ENCODE measurements at regions of chr10 and their contacts with region 1.

Region 1: GRCh38 chr10:29735596-29736318 is 101.0 kb upstream of the SVIL start:
- DNase-seq: peak; percentile 57 to 92 (median 83)
- ATAC-seq: peak; percentile 79
- H3K4me3 ChIP-seq: peak overlapping the region; percentile 55 to 77
- H3K4me3 Mint-ChIP-seq: peak overlapping the region; percentile 88
- H3K27ac ChIP-seq: peak overlapping the region in 1 of 2 experiments; percentile 59
- H3K27ac Mint-ChIP-seq: peak overlapping the region; percentile 83
- H3K4me1 ChIP-seq: peaks cover 42% of the 10 kb centered on the region
- H3K4me1 Mint-ChIP-seq: peaks cover 42% of the 10 kb centered on the region
- H3K27me3 ChIP-seq: no peaks in the 10 kb centered on the region
- H3K27me3 Mint-ChIP-seq: no peaks in the 10 kb centered on the region
- CTCF ChIP-seq: peak; percentile 82

Region 2: DNA sequence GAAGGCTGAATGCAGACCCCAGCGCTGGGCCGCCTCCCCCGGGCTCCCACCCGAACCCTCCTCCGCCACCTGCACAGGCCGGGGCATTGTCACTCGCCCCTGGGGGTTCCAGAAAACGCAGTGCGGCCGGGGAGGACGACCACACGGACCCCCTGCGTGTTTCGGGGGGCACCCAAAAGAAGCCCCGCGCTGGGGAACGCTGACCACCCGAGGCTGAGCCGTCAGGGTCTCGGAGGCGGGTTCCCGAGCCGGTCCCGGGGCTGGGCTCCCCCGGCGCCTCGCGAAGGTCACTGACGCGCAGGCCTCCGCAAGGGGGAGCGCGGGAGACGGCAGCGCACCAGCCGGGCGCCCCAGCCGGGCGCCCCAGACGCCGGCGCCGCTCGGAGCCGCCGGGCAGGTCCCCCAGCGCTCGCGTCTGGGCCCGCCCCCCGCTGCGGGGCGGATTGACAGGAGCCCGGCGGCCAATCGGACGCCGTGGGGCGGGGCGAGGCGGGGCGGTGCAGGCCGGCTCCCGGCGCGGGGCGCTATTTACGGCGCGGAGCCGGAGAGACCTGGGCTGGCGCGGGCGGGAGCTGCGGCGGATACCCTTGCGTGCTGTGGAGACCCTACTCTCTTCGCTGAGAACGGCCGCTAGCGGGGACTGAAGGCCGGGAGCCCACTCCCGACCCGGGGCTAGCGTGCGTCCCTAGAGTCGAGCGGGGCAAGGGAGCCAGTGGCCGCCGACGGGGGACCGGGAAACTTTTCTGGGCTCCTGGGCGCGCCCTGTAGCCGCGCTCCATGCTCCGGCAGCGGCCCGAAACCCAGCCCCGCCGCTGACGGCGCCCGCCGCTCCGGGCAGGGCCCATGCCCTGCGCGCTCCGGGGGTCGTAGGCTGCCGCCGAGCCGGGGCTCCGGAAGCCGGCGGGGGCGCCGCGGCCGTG is 1058.5 kb before region 1 on chr10 and contains the start of gene BAMBI:
- CTCF ChIA-PET with region 1: no interaction called
- POLR2A ChIA-PET with region 1: no interaction called
- intact Hi-C with region 1: loop called in 1 of 2 experiments (anchors 5 kb)
- DNase-seq: peak; percentile 76 to 95 (median 88)
- ATAC-seq: peak; percentile 96
- H3K4me3 ChIP-seq: peak within 1 kb of the TSS; percentile 53 to 59
- H3K4me3 Mint-ChIP-seq: peak within 1 kb of the TSS; percentile 86
- H3K27ac ChIP-seq: no peak within 1 kb of the TSS
- H3K27ac Mint-ChIP-seq: no peak within 1 kb of the TSS
- H3K4me1 ChIP-seq: peaks cover 34% of the 10 kb centered on the region
- H3K4me1 Mint-ChIP-seq: peaks cover 31% of the 10 kb centered on the region
- H3K27me3 ChIP-seq: peaks cover 19 to 20% of the 10 kb centered on the region in 2 experiments
- H3K27me3 Mint-ChIP-seq: peaks cover 68% of the 10 kb centered on the region
- CTCF ChIP-seq: peak; percentile 40
- total RNA-seq, gene BAMBI: 3.5 to 3.6 TPM

Region 3: DNA sequence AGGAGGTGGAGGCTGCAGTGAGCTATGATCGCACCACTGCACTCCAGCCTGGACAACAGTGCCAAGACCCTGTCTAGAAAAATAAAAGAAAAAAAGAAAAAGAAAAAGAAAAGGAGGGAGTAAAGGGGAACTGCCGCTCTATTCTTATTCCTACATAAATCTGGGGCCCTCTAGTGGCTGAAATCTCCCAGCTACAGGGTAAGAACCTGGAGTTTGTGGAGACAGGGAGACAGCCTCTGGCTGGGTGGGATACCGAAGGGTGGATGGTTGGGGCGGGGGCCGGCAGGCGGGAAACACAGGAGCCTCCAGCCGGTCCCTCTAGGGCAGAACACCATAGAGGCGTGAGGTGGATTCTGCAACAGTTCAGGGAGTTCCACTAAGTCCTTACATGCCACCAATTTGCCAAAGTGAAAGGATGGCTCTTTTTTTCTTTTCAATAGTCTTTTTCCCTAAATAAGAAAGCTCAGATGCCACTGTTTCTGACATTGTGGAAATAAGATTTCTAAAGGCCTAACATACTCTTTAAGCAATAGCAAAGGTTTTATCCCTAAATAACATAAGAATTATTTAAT is 218.3 kb before region 1 on chr10:
- CTCF ChIA-PET with region 1: no interaction called
- POLR2A ChIA-PET with region 1: no interaction called
- intact Hi-C with region 1: loop called in 1 of 2 experiments (anchors 2 kb)
- DNase-seq: no peak
- ATAC-seq: no peak
- H3K4me3 ChIP-seq: no peak overlapping the region
- H3K4me3 Mint-ChIP-seq: no peak overlapping the region
- H3K27ac ChIP-seq: no peak overlapping the region
- H3K27ac Mint-ChIP-seq: no peak overlapping the region
- H3K4me1 ChIP-seq: no peaks in the 10 kb centered on the region
- H3K4me1 Mint-ChIP-seq: no peaks in the 10 kb centered on the region
- H3K27me3 ChIP-seq: no peaks in the 10 kb centered on the region
- H3K27me3 Mint-ChIP-seq: no peaks in the 10 kb centered on the region
- CTCF ChIP-seq: no peak

Region 4: DNA sequence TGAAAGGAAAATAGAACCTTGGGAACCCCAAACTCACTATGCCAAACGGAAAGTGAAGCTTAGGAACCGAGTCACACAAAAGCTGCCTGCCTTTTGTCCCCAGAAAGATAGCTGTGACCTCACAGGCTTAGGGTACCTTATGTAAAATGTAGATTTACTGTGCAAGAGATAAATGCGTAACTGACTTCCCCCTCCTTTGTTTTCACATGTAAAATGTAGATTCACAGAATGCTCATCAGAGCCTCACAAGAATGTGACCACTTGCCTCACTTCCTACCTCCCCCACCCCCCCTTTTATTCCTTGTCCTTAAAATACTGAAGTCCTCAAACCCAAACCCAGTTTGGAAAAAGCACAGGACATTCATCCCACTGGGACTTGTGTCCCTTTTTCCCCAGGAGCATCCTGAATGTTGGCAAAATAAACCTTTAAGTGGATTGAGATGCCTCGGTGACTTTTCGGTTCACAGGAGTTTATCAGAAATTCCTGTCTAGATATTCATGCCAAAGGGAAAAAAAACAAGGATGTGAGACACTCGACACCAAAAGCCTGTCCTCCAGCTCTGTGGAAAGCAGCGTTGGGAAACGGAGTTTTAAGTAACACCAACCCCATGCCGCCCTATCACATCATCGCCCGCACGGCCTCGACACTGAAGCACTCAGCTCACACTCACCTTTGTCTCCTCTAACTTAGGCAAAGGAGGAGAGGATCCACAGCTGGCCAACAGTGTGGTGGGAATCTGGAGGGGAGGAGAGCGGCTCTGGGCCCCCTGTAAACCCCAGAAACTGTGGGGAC is 146.9 kb before region 1 on chr10:
- CTCF ChIA-PET with region 1: interaction called, 15 read pairs
- POLR2A ChIA-PET with region 1: no interaction called
- intact Hi-C with region 1: loop called (anchors 1 to 2 kb)
- DNase-seq: no peak
- ATAC-seq: no peak
- H3K4me3 ChIP-seq: no peak overlapping the region
- H3K4me3 Mint-ChIP-seq: no peak overlapping the region
- H3K27ac ChIP-seq: no peak overlapping the region
- H3K27ac Mint-ChIP-seq: no peak overlapping the region
- H3K4me1 ChIP-seq: peaks cover 6% of the 10 kb centered on the region
- H3K4me1 Mint-ChIP-seq: peaks cover 11% of the 10 kb centered on the region
- H3K27me3 ChIP-seq: no peaks in the 10 kb centered on the region
- H3K27me3 Mint-ChIP-seq: no peaks in the 10 kb centered on the region
- CTCF ChIP-seq: no peak

Region 5: DNA sequence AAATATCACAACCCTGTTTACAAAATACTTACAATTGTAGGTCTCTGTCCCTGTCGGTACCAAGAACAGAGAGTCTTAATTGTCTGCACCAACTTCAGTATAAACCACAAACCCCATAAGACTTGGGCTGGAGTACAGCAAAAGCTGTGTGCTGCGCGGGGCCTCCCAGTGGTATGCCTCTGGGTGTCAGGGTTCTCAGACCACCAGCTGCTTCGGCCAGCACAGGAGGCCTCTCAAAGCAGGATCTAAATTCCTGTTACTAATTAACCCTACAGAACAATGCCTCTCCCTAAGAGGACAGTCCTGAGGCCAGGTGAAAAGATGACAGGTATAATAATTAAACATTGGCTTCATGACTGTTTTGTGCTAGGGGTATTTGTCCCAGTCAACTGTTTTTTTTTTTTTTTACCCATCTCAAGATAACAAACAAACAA is 100.0 kb before region 1 on chr10:
- CTCF ChIA-PET with region 1: interaction called, 8 read pairs
- POLR2A ChIA-PET with region 1: interaction called, 3 read pairs
- intact Hi-C with region 1: loop called (anchors 1 to 5 kb)
- DNase-seq: peak in 5 of 9 experiments; percentile 15 to 53 (median 29)
- ATAC-seq: peak; percentile 35
- H3K4me3 ChIP-seq: no peak overlapping the region
- H3K4me3 Mint-ChIP-seq: peak overlapping the region; percentile 40
- H3K27ac ChIP-seq: peak overlapping the region in 1 of 2 experiments; percentile 41
- H3K27ac Mint-ChIP-seq: peak overlapping the region; percentile 69
- H3K4me1 ChIP-seq: peaks cover 25% of the 10 kb centered on the region
- H3K4me1 Mint-ChIP-seq: peaks cover 41% of the 10 kb centered on the region
- H3K27me3 ChIP-seq: no peaks in the 10 kb centered on the region
- H3K27me3 Mint-ChIP-seq: no peaks in the 10 kb centered on the region
- CTCF ChIP-seq: no peak

Region 6: GRCh38 chr10:29658984-29659965 is 76.5 kb before region 1 on chr10:
- CTCF ChIA-PET with region 1: interaction called, 5 read pairs
- POLR2A ChIA-PET with region 1: no interaction called
- intact Hi-C with region 1: loop called in 1 of 2 experiments (anchors 1 kb)
- DNase-seq: peak; percentile 20 to 95 (median 65)
- ATAC-seq: peak; percentile 92
- H3K4me3 ChIP-seq: no peak overlapping the region
- H3K4me3 Mint-ChIP-seq: peak overlapping the region; percentile 50
- H3K27ac ChIP-seq: peak overlapping the region in 1 of 2 experiments; percentile 55
- H3K27ac Mint-ChIP-seq: peak overlapping the region; percentile 91
- H3K4me1 ChIP-seq: peaks cover 27% of the 10 kb centered on the region
- H3K4me1 Mint-ChIP-seq: peaks cover 27% of the 10 kb centered on the region
- H3K27me3 ChIP-seq: no peaks in the 10 kb centered on the region
- H3K27me3 Mint-ChIP-seq: no peaks in the 10 kb centered on the region
- CTCF ChIP-seq: peak; percentile 46

Region 7: DNA sequence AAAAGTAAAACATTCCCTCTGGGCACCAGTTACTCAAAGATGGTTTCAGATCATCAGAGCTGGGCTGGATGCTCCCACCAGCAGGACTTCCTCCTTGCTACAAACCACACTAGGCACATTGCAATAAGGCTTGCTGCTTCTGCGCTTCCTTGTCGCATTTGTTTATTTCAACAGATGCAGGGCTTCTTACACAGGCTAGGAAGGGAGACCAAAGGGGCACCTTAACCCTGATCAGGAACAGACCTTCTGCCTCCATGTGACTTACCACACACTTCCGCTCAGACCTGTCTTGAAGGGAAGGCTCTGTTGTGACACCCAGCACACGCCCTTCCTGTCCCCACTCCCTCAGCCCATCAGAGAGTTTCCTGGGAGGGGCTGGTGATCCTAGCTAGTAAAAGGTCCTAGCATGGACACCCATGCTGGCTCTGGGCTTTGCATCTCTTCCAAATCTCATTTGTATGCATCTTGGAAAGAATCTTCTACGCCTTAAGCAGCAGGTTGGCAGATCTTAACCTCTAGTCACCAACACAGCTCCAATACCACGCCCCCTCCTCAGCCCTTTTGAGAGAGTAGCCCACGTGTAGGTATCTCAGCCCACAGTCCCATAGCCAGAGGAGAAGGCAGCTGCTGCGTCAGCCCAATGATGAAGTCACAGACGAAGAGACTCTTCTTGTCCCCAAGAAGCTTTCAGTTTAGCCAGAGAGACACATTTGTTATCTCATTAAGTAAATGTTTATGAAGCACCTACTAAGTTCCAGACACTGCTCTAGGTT is 53.9 kb before region 1 on chr10:
- CTCF ChIA-PET with region 1: interaction called, 4 read pairs
- POLR2A ChIA-PET with region 1: interaction called, 6 read pairs
- intact Hi-C with region 1: loop called (anchors 1 to 2 kb)
- DNase-seq: peak; percentile 15 to 90 (median 67)
- ATAC-seq: peak; percentile 95
- H3K4me3 ChIP-seq: peak overlapping the region; percentile 14 to 25
- H3K4me3 Mint-ChIP-seq: peak overlapping the region; percentile 74
- H3K27ac ChIP-seq: peak overlapping the region; percentile 42 to 81
- H3K27ac Mint-ChIP-seq: peak overlapping the region; percentile 92
- H3K4me1 ChIP-seq: peaks cover 66% of the 10 kb centered on the region
- H3K4me1 Mint-ChIP-seq: peaks cover 88% of the 10 kb centered on the region
- H3K27me3 ChIP-seq: no peaks in the 10 kb centered on the region
- H3K27me3 Mint-ChIP-seq: no peaks in the 10 kb centered on the region
- CTCF ChIP-seq: no peak

Region 8: GRCh38 chr10:29763396-29763795 is 27.6 kb after region 1 on chr10:
- CTCF ChIA-PET with region 1: no interaction called
- POLR2A ChIA-PET with region 1: no interaction called
- intact Hi-C with region 1: no loop called
- DNase-seq: no peak
- ATAC-seq: no peak
- H3K4me3 ChIP-seq: no peak overlapping the region
- H3K4me3 Mint-ChIP-seq: no peak overlapping the region
- H3K27ac ChIP-seq: no peak overlapping the region
- H3K27ac Mint-ChIP-seq: no peak overlapping the region
- H3K4me1 ChIP-seq: no peaks in the 10 kb centered on the region
- H3K4me1 Mint-ChIP-seq: no peaks in the 10 kb centered on the region
- H3K27me3 ChIP-seq: no peaks in the 10 kb centered on the region
- H3K27me3 Mint-ChIP-seq: no peaks in the 10 kb centered on the region
- CTCF ChIP-seq: no peak